Colonic mucosa (tissue), 4 donors: ENCODE measurements at regions of chr10 and their contacts with region 1.

Region 1: GRCh38 chr10:80144696-80145354 is 12.3 kb downstream of the PLAC9 start:
- DNase-seq: no peak
- H3K4me3 ChIP-seq: no peak overlapping the region
- H3K27ac ChIP-seq: peak overlapping the region; percentile 32
- H3K4me1 ChIP-seq: peaks cover 12% of the 10 kb centered on the region
- H3K27me3 ChIP-seq: no peaks in the 10 kb centered on the region
- CTCF ChIP-seq: no peak

Region 2: GRCh38 chr10:78458983-78459638 is 1685.7 kb before region 1 on chr10:
- intact Hi-C with region 1: no loop called
- DNase-seq: no peak
- H3K4me3 ChIP-seq: no peak overlapping the region
- H3K27ac ChIP-seq: no peak overlapping the region
- H3K4me1 ChIP-seq: no peaks in the 10 kb centered on the region
- H3K27me3 ChIP-seq: no peaks in the 10 kb centered on the region
- CTCF ChIP-seq: no peak

Region 3: GRCh38 chr10:80211786-80212185 is 67.0 kb after region 1 on chr10:
- intact Hi-C with region 1: loop called (anchors 5 kb)
- DNase-seq: no peak
- H3K4me3 ChIP-seq: no peak overlapping the region
- H3K27ac ChIP-seq: no peak overlapping the region
- H3K4me1 ChIP-seq: no peaks in the 10 kb centered on the region
- H3K27me3 ChIP-seq: no peaks in the 10 kb centered on the region
- CTCF ChIP-seq: no peak